Naive thymus-derived CD4-positive, alpha-beta T cell (primary cell): ENCODE measurements at regions of chr12 and their contacts with region 1.

Region 1: DNA sequence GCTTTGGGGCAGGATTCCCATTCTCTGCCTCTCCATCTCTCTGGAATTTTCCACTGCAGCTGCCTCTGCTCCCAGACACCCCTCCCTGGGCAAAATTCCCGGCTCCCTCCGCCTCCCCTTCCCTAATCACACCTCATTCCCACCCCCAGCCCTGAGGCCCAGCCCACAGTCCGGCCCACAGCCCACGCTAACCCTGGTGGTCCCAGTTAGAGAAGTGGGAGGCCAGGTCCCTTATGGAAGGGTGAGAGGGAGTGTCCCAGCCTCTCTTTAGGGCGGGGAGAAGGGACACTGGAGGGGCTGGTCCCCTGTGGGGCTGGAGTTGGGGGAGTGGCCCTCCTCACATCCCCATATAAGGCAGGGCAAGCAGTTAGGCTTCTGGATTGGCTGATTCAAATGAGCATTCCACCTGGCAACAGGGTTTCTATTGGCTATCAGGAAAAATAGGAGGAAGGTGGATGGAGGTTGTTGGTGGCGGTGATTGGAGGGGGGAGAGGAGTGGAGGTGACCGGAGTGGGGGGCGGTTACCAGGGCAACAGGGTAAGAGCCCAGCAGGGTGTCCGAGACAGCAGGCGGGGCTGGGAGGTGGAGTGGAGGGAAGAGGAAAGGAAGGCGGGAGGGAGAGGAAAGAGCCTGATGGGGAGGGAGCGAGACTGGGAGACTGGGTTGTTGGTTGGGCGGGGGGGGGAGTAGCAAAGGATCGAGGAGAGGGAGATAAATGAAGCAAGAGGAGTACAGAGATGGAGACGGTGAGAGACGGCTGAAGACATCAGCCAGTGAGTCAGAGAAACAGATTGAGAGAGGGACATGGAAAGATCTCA is 1.9 kb upstream of the PTMS start:
- DNase-seq: peak in 7 of 9 donors; percentile 40 to 69 (median 55)
- ATAC-seq: peak; percentile 88
- H3K4me3 ChIP-seq: no peak overlapping the region
- H3K4me3 Mint-ChIP-seq: peak overlapping the region; percentile 18 to 96 (median 67)
- H3K27ac ChIP-seq: no peak overlapping the region
- H3K27ac Mint-ChIP-seq: peak overlapping the region in 4 of 9 donors; percentile 9 to 71 (median 43)
- H3K4me1 ChIP-seq: peaks cover 7 to 16% of the 10 kb centered on the region in 2 donors
- H3K4me1 Mint-ChIP-seq: peaks cover 22 to 38% (median 31%) of the 10 kb centered on the region in 7 donors
- H3K27me3 ChIP-seq: no peaks in the 10 kb centered on the region
- H3K27me3 Mint-ChIP-seq: peaks cover 5 to 38% (median 26%) of the 10 kb centered on the region in 5 donors

Region 2: DNA sequence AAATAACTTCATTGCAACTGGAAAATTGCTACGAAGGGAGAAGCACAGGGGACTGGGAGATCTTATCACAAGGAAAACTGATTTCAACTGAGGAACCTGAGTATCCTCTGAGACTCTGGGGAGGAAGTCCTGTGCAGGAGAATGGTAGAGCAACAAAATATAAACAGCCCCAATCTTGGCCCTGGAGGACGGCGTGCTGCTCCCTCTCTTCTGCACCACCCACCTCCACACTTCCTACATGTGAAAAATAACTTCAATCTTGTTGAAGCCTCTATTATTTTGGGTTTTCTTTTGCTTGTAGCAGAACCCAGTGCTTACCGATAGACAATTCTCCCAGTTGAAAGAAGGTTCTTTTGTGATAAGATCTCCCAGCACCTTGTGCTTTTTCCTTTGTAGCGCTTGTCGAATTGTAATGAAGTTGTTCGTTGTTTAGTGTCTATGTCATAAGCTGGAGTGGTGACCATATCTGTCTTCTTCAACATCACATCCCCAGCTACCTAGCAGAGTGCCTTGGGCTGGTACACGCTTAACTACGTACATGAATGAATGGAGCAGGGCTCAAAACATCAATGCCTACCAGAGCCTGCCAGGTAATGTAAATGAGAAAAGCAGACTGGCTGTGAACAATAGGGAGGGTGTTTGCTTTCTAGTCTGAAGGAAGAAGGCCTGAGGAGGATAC is 22.3 kb after region 1 on chr12:
- CTCF ChIA-PET with region 1: interaction called, 24 read pairs
- POLR2A ChIA-PET with region 1: interaction called, 18 read pairs
- intact Hi-C with region 1: no loop called
- DNase-seq: peak in 7 of 9 donors; percentile 64 to 89 (median 87)
- ATAC-seq: peak; percentile 85
- H3K4me3 ChIP-seq: peak overlapping the region; percentile 4
- H3K4me3 Mint-ChIP-seq: peak overlapping the region; percentile 67 to 83 (median 76)
- H3K27ac ChIP-seq: peak overlapping the region; percentile 88
- H3K27ac Mint-ChIP-seq: peak overlapping the region; percentile 92 to 98 (median 96)
- H3K4me1 ChIP-seq: peaks cover 0 to 67% of the 10 kb centered on the region in 2 donors
- H3K4me1 Mint-ChIP-seq: peaks cover 35 to 79% (median 70%) of the 10 kb centered on the region in 7 donors
- H3K27me3 ChIP-seq: no peaks in the 10 kb centered on the region
- H3K27me3 Mint-ChIP-seq: no peaks in the 10 kb centered on the region

Region 3: GRCh38 chr12:6953442-6954315 is 189.5 kb after region 1 on chr12:
- CTCF ChIA-PET with region 1: no interaction called
- POLR2A ChIA-PET with region 1: no interaction called
- intact Hi-C with region 1: loop called in 1 of 2 experiments (anchors 10 kb)
- DNase-seq: peak in 8 of 9 donors; percentile 65 to 92 (median 74)
- ATAC-seq: peak; percentile 56
- H3K4me3 ChIP-seq: peak overlapping the region; percentile 92
- H3K4me3 Mint-ChIP-seq: peak overlapping the region; percentile 93 to 100 (median 98)
- H3K27ac ChIP-seq: peak overlapping the region; percentile 95
- H3K27ac Mint-ChIP-seq: peak overlapping the region; percentile 83 to 100 (median 97)
- H3K4me1 ChIP-seq: peaks cover 70 to 84% of the 10 kb centered on the region in 2 donors
- H3K4me1 Mint-ChIP-seq: peaks cover 54 to 85% (median 72%) of the 10 kb centered on the region in 7 donors
- H3K27me3 ChIP-seq: no peaks in the 10 kb centered on the region
- H3K27me3 Mint-ChIP-seq: no peaks in the 10 kb centered on the region

Region 4: DNA sequence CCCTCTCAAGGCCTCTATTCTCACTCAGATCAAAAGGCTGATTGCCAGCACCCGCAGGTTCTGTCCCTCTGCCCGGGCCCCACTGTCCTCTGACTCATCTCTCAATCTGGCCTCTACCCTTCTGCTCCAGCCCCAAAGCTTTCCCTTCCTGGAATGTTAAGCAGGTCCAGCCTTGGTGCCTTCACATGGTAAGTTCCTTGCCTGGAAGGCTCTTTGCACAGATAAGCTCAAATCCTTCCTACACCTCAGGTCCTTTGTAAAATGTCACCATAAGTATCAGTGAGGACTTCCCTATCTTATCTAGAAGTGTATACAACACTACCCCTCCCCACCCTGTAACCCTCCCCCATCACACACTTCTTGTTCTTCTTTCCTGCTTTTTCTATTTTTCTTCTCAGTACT is 231.8 kb after region 1 on chr12:
- CTCF ChIA-PET with region 1: no interaction called
- POLR2A ChIA-PET with region 1: no interaction called
- intact Hi-C with region 1: no loop called
- DNase-seq: no peak
- ATAC-seq: no peak
- H3K4me3 ChIP-seq: no peak overlapping the region
- H3K4me3 Mint-ChIP-seq: no peak overlapping the region
- H3K27ac ChIP-seq: no peak overlapping the region
- H3K27ac Mint-ChIP-seq: peak overlapping the region in 3 of 9 donors; percentile 21 to 56 (median 38)
- H3K4me1 ChIP-seq: no peaks in the 10 kb centered on the region
- H3K4me1 Mint-ChIP-seq: peaks cover 0 to 15% (median 4%) of the 10 kb centered on the region in 7 donors
- H3K27me3 ChIP-seq: no peaks in the 10 kb centered on the region
- H3K27me3 Mint-ChIP-seq: no peaks in the 10 kb centered on the region